Activated CD4-positive, alpha-beta T cell treated with anti-CD3 and anti-CD28 coated beads for 36 hours (primary cell): ENCODE measurements at regions of chr19 and their contacts with region 1.

Region 1: DNA sequence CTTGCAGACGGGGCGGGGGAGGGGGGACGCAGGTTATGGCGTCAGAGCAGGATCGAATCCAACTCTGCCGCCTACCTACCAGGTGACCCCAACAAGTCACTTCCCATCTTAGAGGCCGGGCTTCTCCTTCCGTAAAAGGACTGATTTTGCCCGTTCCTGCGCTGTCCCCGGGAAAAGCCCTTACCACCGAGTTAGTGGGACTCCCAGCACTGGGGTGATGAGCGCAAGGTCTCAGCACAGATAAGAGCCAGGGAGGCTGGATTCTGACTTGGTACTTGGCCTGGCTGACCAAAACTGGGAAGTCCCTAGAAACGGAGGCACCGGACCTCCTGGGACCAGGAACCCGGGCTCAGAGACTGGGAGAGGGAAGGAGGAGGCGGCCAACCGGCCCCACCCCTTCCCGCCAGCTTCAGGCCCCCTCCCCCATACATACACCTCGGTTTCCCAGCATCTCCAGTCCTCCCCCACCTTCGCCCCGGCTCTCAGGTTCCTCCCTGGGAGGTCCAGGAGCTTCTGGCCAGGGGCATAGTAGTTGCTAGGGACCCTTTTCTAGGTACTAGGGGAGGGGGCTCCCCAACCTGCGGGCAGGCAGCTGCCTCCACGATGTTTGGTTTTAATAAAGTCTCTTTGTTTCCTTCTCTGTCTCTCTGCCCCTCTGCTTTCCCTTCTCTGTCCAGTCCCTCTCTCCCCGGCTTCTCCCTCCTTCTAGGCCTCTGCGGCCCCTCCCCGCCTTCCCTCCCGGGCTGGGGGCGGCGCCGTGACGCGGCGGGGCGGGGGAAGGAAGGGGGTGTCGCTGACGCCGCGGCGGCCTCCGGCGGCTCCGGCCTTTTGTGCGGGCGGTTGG is at the start of gene GRAMD1A:
- DNase-seq: peak; percentile 87
- ATAC-seq: peak; percentile 55
- H3K4me3 Mint-ChIP-seq: peak within 1 kb of the TSS; percentile 100
- H3K27ac Mint-ChIP-seq: peak within 1 kb of the TSS; percentile 100
- H3K4me1 Mint-ChIP-seq: peaks cover 69% of the 10 kb centered on the region
- H3K27me3 Mint-ChIP-seq: no peaks in the 10 kb centered on the region
- total RNA-seq, gene GRAMD1A: 185 to 227 TPM

Region 2: GRCh38 chr19:34963573-34964409 is 35.9 kb before region 1 on chr19 and contains the start of gene ZNF792:
- CTCF ChIA-PET with region 1: interaction called, 12 read pairs
- POLR2A ChIA-PET with region 1: interaction called, 3 read pairs
- intact Hi-C with region 1: loop called in 1 of 2 experiments (anchors 5 kb)
- DNase-seq: peak; percentile 67
- ATAC-seq: peak; percentile 79
- H3K4me3 Mint-ChIP-seq: peak within 1 kb of the TSS; percentile 76
- H3K27ac Mint-ChIP-seq: peak within 1 kb of the TSS; percentile 64
- H3K4me1 Mint-ChIP-seq: peaks cover 24% of the 10 kb centered on the region
- H3K27me3 Mint-ChIP-seq: no peaks in the 10 kb centered on the region
- total RNA-seq, gene ZNF792: 5.6 to 5.7 TPM

Region 3: DNA sequence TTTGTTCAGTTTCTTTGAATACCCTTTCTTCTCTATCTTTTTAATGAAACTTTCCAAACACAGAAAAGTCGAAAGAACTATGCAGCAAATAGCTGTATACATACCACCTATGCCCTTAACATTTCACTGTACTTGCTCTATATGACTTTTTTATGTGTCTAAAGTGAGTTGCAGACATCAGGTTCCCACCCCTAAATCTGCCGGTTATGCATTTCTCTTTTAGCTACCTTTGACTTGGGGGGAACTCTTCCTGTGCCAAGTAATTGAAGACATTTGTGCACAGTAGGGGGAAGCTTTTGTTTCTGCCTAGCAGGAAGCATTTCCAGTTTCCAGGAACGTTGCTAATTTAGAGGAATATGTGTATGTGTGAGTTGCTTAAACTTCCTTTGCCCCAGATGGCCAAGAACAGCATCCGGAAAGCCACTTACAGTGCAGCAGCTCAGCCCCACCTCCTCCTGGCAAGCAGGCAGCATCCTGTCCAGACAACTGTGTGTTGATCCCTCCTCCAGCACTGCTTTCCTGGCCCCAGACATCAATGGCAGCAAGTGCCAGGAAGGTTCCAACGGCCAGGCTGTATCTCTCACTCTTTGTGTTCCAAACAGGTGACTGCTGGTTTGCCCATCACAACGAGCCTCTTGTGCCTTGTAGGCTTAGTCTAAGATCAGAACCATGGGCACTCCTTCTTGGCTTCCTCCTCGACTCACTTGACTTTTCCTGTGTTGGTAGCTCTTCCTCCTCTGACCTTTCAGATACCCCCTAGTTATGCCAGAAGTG is 14.3 kb before region 1 on chr19:
- CTCF ChIA-PET with region 1: interaction called, 7 read pairs
- POLR2A ChIA-PET with region 1: interaction called, 15 read pairs
- intact Hi-C with region 1: loop called in 1 of 2 experiments (anchors 1 kb)
- DNase-seq: peak; percentile 55
- ATAC-seq: peak; percentile 52
- H3K4me3 Mint-ChIP-seq: peak overlapping the region; percentile 48
- H3K27ac Mint-ChIP-seq: peak overlapping the region; percentile 86
- H3K4me1 Mint-ChIP-seq: peaks cover 38% of the 10 kb centered on the region
- H3K27me3 Mint-ChIP-seq: no peaks in the 10 kb centered on the region

Region 4: DNA sequence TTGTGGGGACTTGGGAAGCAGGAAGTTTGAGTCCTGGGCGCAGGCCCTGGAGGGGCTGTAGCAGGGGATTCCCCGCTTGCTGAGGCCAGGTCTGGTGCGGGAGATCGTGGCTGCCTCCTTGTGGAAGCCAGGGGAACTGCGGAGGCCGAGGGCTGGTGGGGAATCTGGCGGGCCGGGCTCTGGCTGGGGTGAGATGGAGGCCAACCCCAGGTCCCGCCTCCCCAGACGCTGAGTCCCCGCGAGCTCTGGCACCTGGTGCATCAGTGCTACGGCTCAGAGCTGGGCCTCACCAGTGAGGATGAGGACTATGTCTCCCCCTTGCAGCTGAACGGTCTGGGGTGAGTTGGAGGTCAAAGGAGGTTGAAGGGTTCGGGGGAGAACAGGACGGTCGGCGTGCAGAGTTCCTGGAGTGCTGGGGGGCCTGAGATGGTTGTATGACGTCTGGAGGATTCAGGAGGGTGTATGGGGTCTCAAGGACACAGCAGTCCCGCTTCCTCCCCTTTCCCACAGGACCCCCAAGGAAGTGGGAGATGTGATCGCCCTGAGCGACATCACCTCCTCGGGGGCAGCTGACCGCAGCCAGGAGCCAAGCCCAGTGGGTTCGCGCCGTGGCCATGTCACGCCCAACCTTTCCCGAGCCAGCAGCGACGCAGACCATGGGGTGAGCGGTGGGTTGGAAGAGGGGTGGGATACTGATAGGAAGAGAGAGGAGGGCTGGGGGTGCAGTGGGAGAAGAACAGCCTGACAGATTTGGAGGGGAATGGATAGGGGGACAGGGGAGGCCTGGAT is 13.5 kb after region 1 on chr19:
- CTCF ChIA-PET with region 1: interaction called, 11 read pairs
- POLR2A ChIA-PET with region 1: interaction called, 4 read pairs
- intact Hi-C with region 1: no loop called
- DNase-seq: peak; percentile 89
- ATAC-seq: peak; percentile 86
- H3K4me3 Mint-ChIP-seq: peak overlapping the region; percentile 39
- H3K27ac Mint-ChIP-seq: peak overlapping the region; percentile 77
- H3K4me1 Mint-ChIP-seq: peaks cover 65% of the 10 kb centered on the region
- H3K27me3 Mint-ChIP-seq: no peaks in the 10 kb centered on the region

Region 5: DNA sequence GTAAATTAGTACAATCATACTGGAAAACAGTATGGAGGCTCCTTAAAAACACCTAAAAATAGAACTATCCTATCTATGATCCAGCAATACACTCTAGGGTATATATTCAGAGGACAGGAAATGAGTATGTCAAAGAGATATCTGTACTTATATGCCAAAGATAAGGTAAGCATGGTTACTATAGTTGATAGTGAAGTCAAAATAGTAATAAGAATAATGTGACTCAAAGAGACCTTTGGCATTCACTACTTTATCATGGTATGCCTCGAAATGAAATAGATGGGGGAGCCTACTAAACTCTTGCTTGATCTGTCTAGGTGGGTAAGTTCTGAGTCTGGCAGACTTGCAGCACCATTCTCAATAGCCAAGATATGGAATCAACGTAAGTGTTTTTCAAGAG is 185.2 kb after region 1 on chr19:
- CTCF ChIA-PET with region 1: no interaction called
- POLR2A ChIA-PET with region 1: no interaction called
- intact Hi-C with region 1: no loop called
- DNase-seq: no peak
- ATAC-seq: peak; percentile 77
- H3K4me3 Mint-ChIP-seq: no peak overlapping the region
- H3K27ac Mint-ChIP-seq: no peak overlapping the region
- H3K4me1 Mint-ChIP-seq: peaks cover 10% of the 10 kb centered on the region
- H3K27me3 Mint-ChIP-seq: no peaks in the 10 kb centered on the region